HCT116 (cell line): ENCODE measurements at regions of chr9 and their contacts with region 1.

Region 1: DNA sequence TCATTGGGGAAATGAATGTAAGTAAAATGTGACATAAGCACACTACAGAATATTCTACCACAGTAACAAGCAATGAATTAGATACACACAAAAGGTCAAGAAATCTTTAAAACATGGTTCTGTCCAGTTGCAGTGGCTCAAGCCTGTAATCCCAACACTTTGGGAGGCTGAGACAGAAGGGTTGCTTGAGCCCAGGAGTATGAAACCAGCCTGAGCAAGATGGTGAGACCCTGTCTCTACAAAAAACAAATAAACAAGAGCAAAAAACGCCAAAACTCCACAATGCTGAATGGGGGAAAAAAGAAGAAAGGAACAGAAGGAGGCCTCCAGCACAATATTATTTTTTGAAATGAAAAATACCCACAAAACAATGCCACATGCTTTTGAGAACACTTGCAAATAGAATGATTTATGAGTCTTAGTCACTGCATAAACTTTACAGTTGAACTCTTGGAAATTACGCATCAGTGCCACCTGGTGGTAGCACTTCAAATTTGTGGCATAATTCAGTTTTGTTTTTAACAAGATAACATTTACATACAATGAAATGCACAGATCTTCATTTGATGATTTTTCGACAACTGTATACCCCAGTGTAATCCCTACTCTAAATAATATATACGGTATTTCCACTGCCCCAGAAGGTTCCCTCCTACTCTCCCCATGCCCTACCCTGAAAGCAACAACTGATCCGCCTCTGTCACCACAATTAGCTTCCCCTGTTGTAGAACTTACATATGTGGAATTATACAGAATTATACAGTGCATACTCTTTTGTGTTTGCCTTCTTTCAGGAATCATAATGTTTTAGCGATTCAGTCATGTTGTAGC is 14.4 kb upstream of the SPINK4 start:
- DNase-seq: peak; percentile 68
- ATAC-seq: no peak
- H3K4me3 ChIP-seq: no peak overlapping the region
- H3K27ac ChIP-seq: no peak overlapping the region
- H3K4me1 ChIP-seq: peaks cover 17 to 26% of the 10 kb centered on the region in 2 experiments
- H3K27me3 ChIP-seq: no peaks in the 10 kb centered on the region
- CTCF ChIP-seq: peak in 2 of 3 experiments; percentile 54 to 77; a peak in 4 of 6 replicates
- POLR2A ChIP-seq: no peak
- RAD21 ChIP-seq: no peak

Region 2: DNA sequence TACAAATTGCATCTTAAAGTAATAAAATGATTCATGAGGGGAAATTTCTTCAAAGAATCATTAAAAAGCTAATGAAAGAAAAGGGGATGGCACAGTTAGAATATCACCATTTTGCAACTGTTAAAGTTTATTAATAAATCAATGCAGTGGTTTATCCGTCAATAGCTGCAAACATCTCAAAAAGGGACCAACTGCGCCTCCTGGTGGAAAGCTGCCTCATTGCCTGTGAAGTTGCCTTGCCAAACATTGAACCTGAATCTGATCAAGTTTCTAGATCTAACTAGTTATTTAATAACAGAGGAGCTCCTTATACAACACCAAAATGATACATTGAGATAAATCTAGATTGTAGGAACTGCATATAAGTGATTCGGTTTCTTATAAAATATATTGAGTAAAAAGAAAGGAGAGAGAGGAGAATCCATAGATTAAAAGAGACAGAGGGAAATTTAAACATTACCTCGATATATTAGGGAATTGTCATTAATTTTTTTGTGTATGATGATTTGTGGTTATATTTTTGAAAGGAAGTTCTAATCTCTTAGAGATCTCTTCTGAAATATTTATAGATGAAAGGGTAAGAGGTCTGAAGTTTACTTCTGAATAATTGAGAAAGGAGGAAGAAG is 645.7 kb before region 1 on chr9:
- CTCF ChIA-PET with region 1: interaction called, 5 read pairs
- POLR2A ChIA-PET with region 1: no interaction called
- RAD21 ChIA-PET with region 1: no interaction called
- intact Hi-C with region 1: loop called (anchors 10 kb)
- DNase-seq: peak; percentile 48
- ATAC-seq: peak; percentile 49; the same call in 1 of the 2 replicates
- H3K4me3 ChIP-seq: no peak overlapping the region
- H3K27ac ChIP-seq: no peak overlapping the region
- H3K4me1 ChIP-seq: no peaks in the 10 kb centered on the region
- H3K27me3 ChIP-seq: no peaks in the 10 kb centered on the region
- CTCF ChIP-seq: peak; percentile 85 to 94 (median 91)
- POLR2A ChIP-seq: no peak
- RAD21 ChIP-seq: peak; percentile 83

Region 3: DNA sequence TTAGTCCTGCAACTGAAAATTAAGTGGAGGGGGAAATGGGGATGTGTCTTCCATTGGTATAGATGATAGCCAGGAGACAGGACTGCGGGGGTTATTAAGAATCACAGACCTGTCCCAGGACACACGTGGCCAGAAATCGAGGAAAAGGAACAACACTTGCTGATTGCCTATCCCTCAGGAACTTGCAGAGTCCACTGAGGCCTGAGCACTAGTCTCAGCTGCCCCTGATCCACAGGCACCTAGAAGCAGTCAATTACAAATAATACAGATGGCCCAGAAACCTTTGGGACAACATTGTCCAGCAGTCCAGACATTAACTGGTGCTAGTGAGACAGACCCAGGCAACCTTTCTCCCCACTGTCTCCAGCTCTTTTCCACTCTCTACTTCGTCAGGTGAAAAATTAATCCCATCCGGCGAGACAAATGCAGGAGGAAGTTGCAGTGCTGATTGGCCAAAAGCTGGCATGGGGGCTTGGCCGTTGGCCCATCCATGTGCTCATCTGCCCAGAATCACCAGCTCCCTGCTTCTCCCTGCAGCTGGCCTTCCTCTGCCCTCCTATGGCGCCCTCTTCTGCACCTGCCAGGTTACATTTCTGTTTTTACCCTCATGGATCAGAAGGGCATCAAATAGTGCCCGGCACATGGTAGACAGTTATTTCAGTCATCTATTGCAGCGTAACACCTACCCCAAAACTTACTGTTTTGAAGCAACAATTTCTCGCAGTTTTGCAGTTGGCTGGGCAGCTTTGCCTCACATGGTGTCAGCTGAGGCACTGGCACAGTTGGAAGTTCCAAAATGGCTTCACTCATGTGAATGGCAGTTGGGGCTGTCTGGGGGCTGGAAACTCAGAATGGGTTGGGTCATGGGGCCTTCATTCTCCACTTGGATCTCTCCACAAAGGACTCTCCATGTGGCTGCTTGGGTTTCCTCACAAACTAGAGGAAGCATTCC is 54.8 kb before region 1 on chr9:
- CTCF ChIA-PET with region 1: no interaction called
- POLR2A ChIA-PET with region 1: no interaction called
- RAD21 ChIA-PET with region 1: no interaction called
- intact Hi-C with region 1: loop called (anchors 2 kb)
- DNase-seq: peak; percentile 49
- ATAC-seq: peak; percentile 15; the same call in 1 of the 2 replicates
- H3K4me3 ChIP-seq: no peak overlapping the region
- H3K27ac ChIP-seq: no peak overlapping the region
- H3K4me1 ChIP-seq: peaks cover 19 to 38% of the 10 kb centered on the region in 2 experiments; a peak in 3 of 4 replicates
- H3K27me3 ChIP-seq: no peaks in the 10 kb centered on the region
- CTCF ChIP-seq: peak in 2 of 3 experiments; percentile 30 to 52; a peak in 3 of 6 replicates
- POLR2A ChIP-seq: no peak
- RAD21 ChIP-seq: no peak

Region 4: DNA sequence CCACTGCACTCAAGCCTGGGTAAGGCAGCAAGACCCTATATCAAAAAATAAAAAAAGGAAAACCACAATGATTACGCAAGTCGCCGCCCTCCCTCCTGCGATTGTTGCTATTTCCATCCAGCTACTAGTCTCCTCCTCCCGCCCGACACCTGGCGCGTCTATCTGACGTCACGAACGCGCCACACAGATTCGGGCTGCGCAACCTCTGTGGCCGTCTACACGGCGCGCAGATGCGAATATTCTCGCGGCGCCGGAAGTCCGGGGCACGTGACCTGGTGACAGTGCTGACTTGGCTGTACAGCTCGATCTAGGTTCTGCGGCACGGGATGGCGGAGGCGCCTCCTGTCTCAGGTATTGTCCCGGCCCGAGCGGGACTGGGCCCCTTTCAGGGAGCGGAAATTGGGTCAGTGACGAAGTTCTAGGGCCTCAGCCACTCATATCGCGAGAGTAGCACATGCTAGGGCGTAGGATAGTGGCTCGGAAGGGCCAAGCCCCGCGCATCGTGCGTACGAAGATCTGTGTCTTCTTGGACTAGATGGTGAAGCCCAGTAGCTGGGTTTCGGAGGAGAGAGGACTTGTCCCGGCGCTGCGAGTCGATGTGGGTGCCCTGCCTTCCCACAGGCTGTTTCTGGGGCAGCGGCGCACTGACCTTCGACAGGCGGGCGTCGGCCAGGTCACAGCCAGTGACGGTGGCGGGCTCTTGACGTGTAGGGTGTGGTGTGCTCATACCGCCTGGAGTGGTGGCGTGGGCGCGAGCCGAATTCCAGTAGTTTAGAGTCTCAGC is 64.9 kb after region 1 on chr9 and contains the start of gene NFX1:
- CTCF ChIA-PET with region 1: no interaction called
- POLR2A ChIA-PET with region 1: no interaction called
- RAD21 ChIA-PET with region 1: no interaction called
- intact Hi-C with region 1: loop called (anchors 1 kb)
- DNase-seq: peak; percentile 95
- ATAC-seq: peak; percentile 94
- H3K4me3 ChIP-seq: peak within 1 kb of the TSS; percentile 80 to 85
- H3K27ac ChIP-seq: peak within 1 kb of the TSS; percentile 83
- H3K4me1 ChIP-seq: peaks cover 5 to 22% of the 10 kb centered on the region in 2 experiments; a peak in 2 of 4 replicates
- H3K27me3 ChIP-seq: no peaks in the 10 kb centered on the region
- CTCF ChIP-seq: no peak
- POLR2A ChIP-seq: peak; percentile 68
- RAD21 ChIP-seq: no peak
- total RNA-seq, gene NFX1: 31.7 TPM

Region 5: DNA sequence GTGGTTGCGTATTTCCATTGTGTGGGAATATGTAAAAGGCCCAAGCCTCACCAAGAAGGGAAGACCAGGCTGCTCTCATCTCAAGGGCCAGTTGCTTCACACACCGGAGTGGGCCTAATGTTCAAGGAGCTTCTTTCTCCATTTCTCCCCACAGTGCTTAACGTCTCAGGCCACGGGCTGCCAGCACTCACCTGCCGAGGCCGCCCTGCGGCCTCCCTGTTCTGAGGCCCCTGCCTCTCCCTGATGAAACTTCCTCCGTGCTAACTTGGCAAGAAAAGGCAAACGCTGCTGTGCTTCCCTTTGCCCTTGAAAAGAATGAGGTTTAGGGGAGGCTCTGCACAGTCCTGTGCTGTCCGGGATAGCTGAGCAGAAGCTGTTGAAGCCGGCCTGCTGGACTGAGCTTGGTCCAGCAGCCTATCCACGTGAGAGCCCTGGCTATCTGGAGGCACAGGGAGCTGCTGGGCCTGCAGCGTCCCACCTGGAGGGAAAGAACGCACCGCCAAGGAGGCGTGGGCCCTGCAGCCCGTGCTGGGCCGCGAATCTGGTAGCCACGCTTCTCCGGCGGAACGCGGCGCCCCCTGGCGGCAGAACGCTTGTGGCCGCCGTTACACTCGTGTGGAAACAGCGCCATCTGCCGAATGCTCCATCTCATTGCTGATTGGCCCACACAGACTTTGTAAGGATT is 496.3 kb after region 1 on chr9:
- CTCF ChIA-PET with region 1: no interaction called
- POLR2A ChIA-PET with region 1: no interaction called
- RAD21 ChIA-PET with region 1: no interaction called
- intact Hi-C with region 1: loop called (anchors 1 kb)
- DNase-seq: peak; percentile 81
- ATAC-seq: peak; percentile 85
- H3K4me3 ChIP-seq: no peak overlapping the region
- H3K27ac ChIP-seq: no peak overlapping the region
- H3K4me1 ChIP-seq: peaks cover 0 to 5% of the 10 kb centered on the region in 2 experiments; a peak in 2 of 4 replicates
- H3K27me3 ChIP-seq: 0 out of 2 replicates have a peak, but pooled peaks cover 3% of the 10 kb centered on the region
- CTCF ChIP-seq: peak; percentile 95 to 100 (median 98)
- POLR2A ChIP-seq: no peak
- RAD21 ChIP-seq: peak; percentile 100